T-cell (primary cell): ENCODE measurements at regions of chr20 and their contacts with region 1.

Region 1: DNA sequence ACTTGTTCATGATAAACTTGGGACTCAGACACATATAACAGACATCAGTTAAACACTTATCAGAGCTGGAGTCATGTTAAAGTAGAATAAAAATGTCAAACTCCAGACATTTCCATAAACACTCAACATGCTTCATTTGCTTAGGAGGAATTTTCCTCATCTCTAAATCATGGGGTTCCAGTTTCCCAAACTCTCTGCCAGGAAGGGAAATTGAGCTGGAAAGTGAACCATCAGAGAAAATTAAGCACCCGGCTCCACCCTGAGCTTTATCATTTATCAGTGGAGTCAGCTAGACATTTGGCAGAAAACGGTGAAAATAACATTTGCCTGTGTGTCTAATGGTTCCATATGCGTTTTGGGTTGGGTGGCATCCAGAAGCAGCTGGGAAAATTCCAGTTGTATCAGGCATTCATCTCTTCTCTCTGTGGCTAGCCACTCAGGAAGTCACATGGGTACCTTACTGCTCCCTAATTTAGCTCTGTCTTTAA is 25.3 kb upstream of the ZNFX1 start:
- DNase-seq: no peak
- ATAC-seq: no peak
- H3K4me3 ChIP-seq: no peak overlapping the region
- H3K4me3 Mint-ChIP-seq: no peak overlapping the region
- H3K27ac ChIP-seq: no peak overlapping the region
- H3K27ac Mint-ChIP-seq: no peak overlapping the region
- H3K4me1 ChIP-seq: peaks cover 0 to 8% of the 10 kb centered on the region in 2 experiments
- H3K4me1 Mint-ChIP-seq: peaks cover 4 to 22% (median 20%) of the 10 kb centered on the region in 3 donors
- H3K27me3 ChIP-seq: no peaks in the 10 kb centered on the region
- H3K27me3 Mint-ChIP-seq: no peaks in the 10 kb centered on the region

Region 2: GRCh38 chr20:49323622-49324238 is 20.6 kb after region 1 on chr20:
- CTCF ChIA-PET with region 1: no interaction called
- POLR2A ChIA-PET with region 1: interaction called in 1 of 2 experiments, 15 read pairs
- DNase-seq: peak in 14 of 35 experiments; percentile 1 to 67 (median 14)
- ATAC-seq: peak; percentile 75 to 88 (median 86)
- H3K4me3 ChIP-seq: no peak overlapping the region
- H3K4me3 Mint-ChIP-seq: no peak overlapping the region
- H3K27ac ChIP-seq: no peak overlapping the region
- H3K27ac Mint-ChIP-seq: peak overlapping the region; percentile 58 to 87
- H3K4me1 ChIP-seq: peaks cover 0 to 21% of the 10 kb centered on the region in 2 experiments
- H3K4me1 Mint-ChIP-seq: peaks cover 18 to 25% (median 22%) of the 10 kb centered on the region in 3 donors
- H3K27me3 ChIP-seq: peaks cover 4 to 23% of the 10 kb centered on the region in 2 experiments
- H3K27me3 Mint-ChIP-seq: peaks cover 20 to 28% of the 10 kb centered on the region in 2 donors